ENCODE measurements at regions of chr2 and their contacts with region 1.

Region 1: DNA sequence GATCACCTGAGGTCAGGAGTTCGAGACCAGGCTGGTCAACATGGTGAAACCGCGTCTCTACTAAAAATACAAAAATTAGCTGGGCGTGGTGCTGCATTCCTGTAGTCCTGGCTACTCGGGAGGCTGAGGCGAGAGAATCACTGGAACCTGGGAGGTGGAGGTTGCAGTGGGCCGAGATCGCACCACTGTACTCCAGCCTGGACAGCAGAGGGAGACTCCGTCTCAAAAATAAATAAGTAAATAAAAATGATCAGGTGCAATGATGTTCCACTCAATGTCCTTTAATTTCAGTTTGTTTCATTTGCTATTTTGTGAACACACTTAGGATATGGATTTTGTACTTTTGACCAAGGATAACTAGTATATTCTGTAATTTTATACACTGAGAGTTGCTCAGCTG is 9.3 kb downstream of the HADHA start:
- DNase-seq: no peak
- CTCF ChIP-seq: no peak

Region 2: GRCh38 chr2:26164231-26164630 is 70.9 kb before region 1 on chr2:
- CTCF ChIA-PET with region 1: no interaction called
- POLR2A ChIA-PET with region 1: no interaction called
- DNase-seq: no peak
- CTCF ChIP-seq: no peak

Region 3: GRCh38 chr2:26251893-26252292 is 16.8 kb after region 1 on chr2:
- CTCF ChIA-PET with region 1: interaction called, 11 read pairs
- POLR2A ChIA-PET with region 1: interaction called, 3 read pairs
- DNase-seq: no peak
- CTCF ChIP-seq: no peak